RWPE1 (cell line): ENCODE measurements at regions of chr11 and their contacts with region 1.

Region 1: DNA sequence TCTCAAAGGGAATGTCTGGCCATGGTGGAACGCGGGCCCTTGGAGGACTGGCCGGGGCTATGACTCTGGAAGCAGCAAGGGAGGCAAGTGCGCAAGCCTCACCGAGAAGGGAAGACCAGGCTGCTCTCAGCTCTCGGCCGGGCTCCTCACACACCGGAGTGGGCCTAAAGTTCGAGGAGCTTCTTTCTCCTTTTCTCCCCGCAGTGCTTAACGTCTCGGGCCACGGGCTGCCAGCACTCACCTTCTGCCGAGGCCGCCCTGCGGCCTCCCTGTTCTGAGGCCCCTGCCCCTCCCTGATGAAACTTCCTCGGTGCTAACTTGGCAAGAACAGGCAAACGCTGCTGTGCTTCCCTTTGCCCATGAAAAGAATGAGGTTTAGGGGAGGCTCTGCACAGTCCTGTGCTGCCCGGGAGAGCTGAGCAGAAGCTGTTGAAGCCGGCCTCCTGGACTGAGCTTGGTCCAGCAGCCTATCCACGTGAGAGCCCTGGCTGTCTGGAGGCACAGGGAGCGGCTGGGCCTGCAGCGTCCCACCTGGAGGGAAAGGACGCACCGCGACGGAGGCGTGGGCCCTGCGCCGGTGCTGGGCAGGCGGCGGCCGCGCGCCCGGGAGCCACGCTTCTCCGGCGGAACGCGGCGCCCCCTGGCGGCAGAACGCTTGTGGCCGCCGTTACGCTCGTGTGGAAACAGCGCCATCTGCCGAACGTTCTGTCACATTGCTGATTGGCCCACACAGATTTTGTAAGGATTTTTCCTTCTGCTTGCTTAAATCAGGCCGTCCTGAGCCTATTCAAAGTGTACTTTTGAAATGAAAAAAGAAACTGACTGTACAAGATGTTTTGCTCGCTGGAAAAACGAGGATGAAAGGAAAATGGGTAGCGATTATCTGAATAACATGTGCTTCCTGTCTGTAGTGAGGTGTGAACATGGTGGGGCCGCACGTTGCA is 65.0 kb upstream of the TMEM45B start:
- DNase-seq: peak; percentile 45
- H3K27ac ChIP-seq: peak overlapping the region; percentile 7; the same call in 1 of the 2 replicates
- CTCF ChIP-seq: peak; percentile 94

Region 2: GRCh38 chr11:129364143-129364654 is 386.4 kb before region 1 on chr11:
- CTCF ChIA-PET with region 1: interaction called, 27 read pairs
- POLR2A ChIA-PET with region 1: no interaction called
- DNase-seq: peak; percentile 82
- H3K27ac ChIP-seq: no peak overlapping the region
- CTCF ChIP-seq: peak; percentile 99

Region 3: DNA sequence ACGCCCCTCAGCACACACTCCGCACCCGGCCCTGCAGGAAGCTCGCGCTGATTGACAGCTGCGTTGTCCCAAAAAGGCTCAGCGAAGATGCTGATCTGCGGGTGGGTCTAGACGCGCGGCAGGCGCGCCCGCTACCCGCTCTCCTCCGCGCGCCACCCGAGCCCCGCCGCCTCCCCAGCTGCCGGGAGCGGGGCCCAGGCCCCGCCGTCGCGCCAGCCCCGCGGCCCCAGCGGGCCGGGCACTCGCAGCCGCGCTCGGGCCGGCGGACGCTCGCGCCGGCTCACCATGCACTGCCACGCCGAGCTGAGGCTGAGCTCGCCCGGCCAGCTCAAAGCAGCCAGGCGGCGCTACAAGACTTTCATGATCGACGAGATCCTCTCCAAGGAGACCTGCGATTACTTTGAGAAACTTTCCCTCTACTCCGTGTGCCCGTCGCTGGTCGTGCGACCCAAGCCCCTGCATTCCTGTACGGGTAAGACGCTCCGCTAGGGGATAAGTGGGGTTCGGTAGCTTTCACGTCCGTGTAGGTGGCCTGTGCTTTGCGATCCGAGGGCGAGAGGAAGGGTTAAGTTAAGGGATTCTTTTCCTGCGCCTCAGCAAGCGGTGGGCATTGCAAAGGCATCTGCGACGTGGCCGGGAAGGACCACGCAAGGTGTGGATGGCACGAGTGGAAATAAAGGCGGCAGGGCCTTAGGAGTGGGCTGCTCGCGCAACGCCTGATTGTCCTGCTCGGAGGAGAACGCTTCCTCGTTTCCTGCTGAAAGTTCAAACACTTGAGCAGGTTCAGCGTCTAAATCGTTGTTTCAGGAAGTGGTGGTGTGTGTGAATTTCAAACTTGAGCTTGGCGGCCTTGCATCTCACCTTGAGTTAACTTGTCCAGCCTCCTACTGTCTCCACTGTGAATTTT is 374.6 kb before region 1 on chr11 and contains the start of gene BARX2:
- CTCF ChIA-PET with region 1: interaction called, 24 read pairs
- POLR2A ChIA-PET with region 1: no interaction called
- DNase-seq: peak; percentile 51
- H3K27ac ChIP-seq: peak within 1 kb of the TSS; percentile 65
- CTCF ChIP-seq: peak; percentile 77